ENCODE measurements at regions of chr15 and their contacts with region 1.

Region 1: GRCh38 chr15:57861036-57861638 is 154.6 kb downstream of the POLR2M start:
- DNase-seq: peak; percentile 75 to 86 (median 79)
- H3K4me3 ChIP-seq: no peak overlapping the region
- H3K27ac ChIP-seq: no peak overlapping the region
- H3K4me1 ChIP-seq: no peaks in the 10 kb centered on the region
- H3K27me3 ChIP-seq: peaks cover 0 to 74% (median 38%) of the 10 kb centered on the region in 5 experiments

Region 2: DNA sequence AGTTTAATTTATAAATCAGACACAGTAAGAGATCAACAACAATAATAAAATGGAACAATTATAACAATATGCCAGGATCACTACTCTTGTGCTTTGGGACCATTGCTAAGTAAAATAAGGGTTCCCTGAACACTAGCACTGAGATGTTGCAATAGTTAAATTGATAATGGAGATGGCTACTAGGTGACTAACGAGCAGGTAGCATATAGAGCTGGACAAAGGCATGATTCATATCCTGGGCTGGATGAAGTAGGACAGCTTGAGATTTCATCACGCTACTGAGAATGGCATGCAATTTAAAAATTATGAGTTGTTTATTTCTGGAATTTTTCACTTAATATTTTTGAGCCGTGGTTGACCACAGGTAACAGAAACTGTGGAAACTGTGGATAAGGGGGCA is 290.1 kb before region 1 on chr15:
- CTCF ChIA-PET with region 1: no interaction called
- POLR2A ChIA-PET with region 1: no interaction called
- DNase-seq: no peak
- H3K4me3 ChIP-seq: no peak overlapping the region
- H3K27ac ChIP-seq: no peak overlapping the region
- H3K4me1 ChIP-seq: no peaks in the 10 kb centered on the region
- H3K27me3 ChIP-seq: no peaks in the 10 kb centered on the region

Region 3: GRCh38 chr15:57751177-57751800 is 109.8 kb before region 1 on chr15:
- CTCF ChIA-PET with region 1: interaction called, 23 read pairs
- POLR2A ChIA-PET with region 1: no interaction called
- DNase-seq: peak in 2 of 3 donors; percentile 18 to 19
- H3K4me3 ChIP-seq: no peak overlapping the region
- H3K27ac ChIP-seq: no peak overlapping the region
- H3K4me1 ChIP-seq: peaks cover 0 to 6% (median 3%) of the 10 kb centered on the region in 4 experiments
- H3K27me3 ChIP-seq: peaks cover 0 to 19% (median 2%) of the 10 kb centered on the region in 5 experiments

Region 4: GRCh38 chr15:57849317-57849716 is 11.8 kb before region 1 on chr15:
- CTCF ChIA-PET with region 1: interaction called, 23 read pairs
- POLR2A ChIA-PET with region 1: no interaction called
- DNase-seq: no peak
- H3K4me3 ChIP-seq: no peak overlapping the region
- H3K27ac ChIP-seq: no peak overlapping the region
- H3K4me1 ChIP-seq: no peaks in the 10 kb centered on the region
- H3K27me3 ChIP-seq: peaks cover 0 to 12% (median 0%) of the 10 kb centered on the region in 5 experiments

Region 5: DNA sequence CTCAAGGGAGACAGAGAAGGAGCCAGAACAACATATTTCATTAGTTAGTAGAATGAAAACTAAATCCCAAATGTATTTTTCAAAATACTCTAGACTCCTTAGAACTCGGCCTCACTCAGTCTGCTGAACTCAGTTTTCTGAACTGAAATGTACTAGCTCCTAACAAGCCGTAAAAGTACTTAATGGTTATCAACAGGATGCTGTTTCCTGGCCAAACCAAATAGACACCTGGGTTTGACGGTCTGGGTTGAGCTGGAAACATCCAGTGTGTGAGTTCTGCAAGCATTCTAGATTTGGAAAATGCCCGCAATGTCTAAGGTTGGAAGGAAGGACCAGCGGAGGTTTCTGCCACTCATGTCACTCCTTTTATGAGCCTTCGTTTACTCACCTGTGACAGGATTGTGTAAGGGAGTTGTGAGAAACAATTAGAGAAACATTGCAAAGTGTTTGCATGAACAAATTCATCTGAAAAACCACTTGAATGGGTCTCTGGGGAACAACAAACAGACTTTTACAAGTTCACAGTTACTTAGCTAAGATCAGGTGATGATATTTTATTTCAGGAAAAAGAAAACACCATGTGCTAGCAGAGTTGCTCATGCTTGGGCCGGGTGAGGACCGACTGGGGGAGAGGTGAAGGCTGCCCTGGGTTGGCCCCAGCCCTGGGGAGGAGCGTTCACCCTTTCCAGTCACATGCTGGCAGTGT is 53.4 kb after region 1 on chr15:
- CTCF ChIA-PET with region 1: no interaction called
- POLR2A ChIA-PET with region 1: no interaction called
- DNase-seq: no peak
- H3K4me3 ChIP-seq: no peak overlapping the region
- H3K27ac ChIP-seq: no peak overlapping the region
- H3K4me1 ChIP-seq: no peaks in the 10 kb centered on the region
- H3K27me3 ChIP-seq: peaks cover 0 to 13% (median 4%) of the 10 kb centered on the region in 5 experiments

Region 6: GRCh38 chr15:58070801-58071418 is 209.8 kb after region 1 on chr15:
- CTCF ChIA-PET with region 1: interaction called, 20 read pairs
- POLR2A ChIA-PET with region 1: no interaction called
- DNase-seq: peak; percentile 48 to 69 (median 61)
- H3K4me3 ChIP-seq: no peak overlapping the region
- H3K27ac ChIP-seq: no peak overlapping the region
- H3K4me1 ChIP-seq: peaks cover 0 to 6% (median 6%) of the 10 kb centered on the region in 4 experiments
- H3K27me3 ChIP-seq: peaks cover 4 to 52% (median 19%) of the 10 kb centered on the region in 5 experiments

Region 7: GRCh38 chr15:58182460-58183163 is 321.5 kb after region 1 on chr15:
- CTCF ChIA-PET with region 1: interaction called, 17 read pairs
- POLR2A ChIA-PET with region 1: no interaction called
- DNase-seq: peak; percentile 49 to 57 (median 56)
- H3K4me3 ChIP-seq: no peak overlapping the region
- H3K27ac ChIP-seq: no peak overlapping the region
- H3K4me1 ChIP-seq: peaks cover 0 to 13% (median 0%) of the 10 kb centered on the region in 4 experiments
- H3K27me3 ChIP-seq: peaks cover 0 to 11% (median 0%) of the 10 kb centered on the region in 5 experiments